ENCODE measurements at regions of chr11 and their contacts with region 1.

Region 1: DNA sequence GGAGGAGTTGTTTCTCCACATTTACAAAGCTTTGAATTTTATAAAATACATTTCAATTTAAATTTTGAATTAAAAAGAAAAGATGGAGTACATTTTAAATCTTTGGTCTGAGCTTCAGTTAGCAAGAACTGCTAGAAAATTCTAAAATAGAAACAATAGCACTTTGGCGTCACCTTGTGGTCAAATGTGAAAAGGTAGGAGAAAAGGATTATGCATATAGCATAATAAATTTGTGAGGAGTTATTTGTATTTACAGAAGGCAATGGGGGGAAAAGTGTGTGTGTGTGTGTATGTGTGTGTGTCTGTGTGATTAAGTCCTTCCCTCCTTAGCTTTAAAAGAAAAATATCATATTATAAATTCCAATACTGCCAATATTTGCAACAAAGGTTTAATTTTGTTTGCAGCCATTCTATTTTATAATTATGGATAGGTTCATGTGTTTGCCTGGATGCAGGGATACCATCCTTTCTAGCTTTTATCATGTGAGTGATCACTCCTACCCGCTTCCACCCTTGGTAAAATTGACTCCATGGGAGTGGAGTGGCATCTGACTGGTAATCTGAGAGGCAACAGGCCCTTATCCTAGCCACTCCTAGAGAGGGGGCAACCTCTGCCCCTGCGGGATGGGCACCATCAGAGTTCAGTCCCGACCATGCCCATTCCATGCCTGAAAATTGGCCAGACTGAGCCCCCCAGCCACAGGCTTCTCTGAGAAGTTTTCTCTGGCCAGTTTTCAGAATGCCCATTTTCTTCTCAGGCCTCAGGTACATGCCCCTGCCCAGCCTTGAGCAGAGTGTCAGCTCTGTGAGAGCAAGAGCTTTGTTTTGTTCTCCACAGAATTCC is 13.6 kb upstream of the LGR4 start:
- DNase-seq: no peak
- ATAC-seq: peak in 3 of 4 donors; percentile 67 to 84 (median 72)
- H3K4me3 ChIP-seq: no peak overlapping the region
- H3K27ac ChIP-seq: no peak overlapping the region
- H3K4me1 ChIP-seq: peaks cover 6% of the 10 kb centered on the region
- H3K27me3 ChIP-seq: no peaks in the 10 kb centered on the region
- CTCF ChIP-seq: peak; percentile 95

Region 2: DNA sequence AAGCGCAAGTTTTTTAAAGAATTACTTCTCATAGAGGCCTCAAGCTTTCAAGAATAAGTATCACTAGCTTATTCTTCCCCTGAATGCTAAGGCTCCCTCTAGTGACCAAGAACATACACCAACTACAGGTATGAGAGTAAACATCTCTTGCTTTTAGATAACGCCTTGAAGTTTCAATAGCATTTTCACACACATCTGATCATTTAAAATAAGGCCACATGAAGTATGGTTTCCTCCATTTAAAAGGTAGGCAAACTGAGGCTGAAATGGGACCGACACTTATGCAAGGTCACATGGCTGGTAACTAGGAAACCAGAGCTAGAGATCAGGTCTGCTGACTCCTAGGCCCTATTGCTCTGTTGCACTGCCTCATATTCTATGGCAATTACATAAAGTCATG is 189.7 kb before region 1 on chr11:
- intact Hi-C with region 1: loop called (anchors 2 to 10 kb)
- DNase-seq: no peak
- ATAC-seq: peak in 3 of 4 donors; percentile 72 to 91 (median 78)
- H3K4me3 ChIP-seq: no peak overlapping the region
- H3K27ac ChIP-seq: no peak overlapping the region
- H3K4me1 ChIP-seq: no peaks in the 10 kb centered on the region
- H3K27me3 ChIP-seq: no peaks in the 10 kb centered on the region
- CTCF ChIP-seq: peak; percentile 78

Region 3: GRCh38 chr11:27571156-27571825 is 85.1 kb after region 1 on chr11:
- intact Hi-C with region 1: no loop called
- DNase-seq: no peak
- ATAC-seq: no peak
- H3K4me3 ChIP-seq: no peak overlapping the region
- H3K27ac ChIP-seq: no peak overlapping the region
- H3K4me1 ChIP-seq: no peaks in the 10 kb centered on the region
- H3K27me3 ChIP-seq: no peaks in the 10 kb centered on the region
- CTCF ChIP-seq: no peak

Region 4: GRCh38 chr11:27612932-27613880 is 127.1 kb after region 1 on chr11:
- intact Hi-C with region 1: no loop called
- DNase-seq: no peak
- ATAC-seq: no peak
- H3K4me3 ChIP-seq: no peak overlapping the region
- H3K27ac ChIP-seq: no peak overlapping the region
- H3K4me1 ChIP-seq: no peaks in the 10 kb centered on the region
- H3K27me3 ChIP-seq: no peaks in the 10 kb centered on the region
- CTCF ChIP-seq: no peak